HepG2 (cell line): ENCODE measurements at regions of chr18 and their contacts with region 1.

Region 1: DNA sequence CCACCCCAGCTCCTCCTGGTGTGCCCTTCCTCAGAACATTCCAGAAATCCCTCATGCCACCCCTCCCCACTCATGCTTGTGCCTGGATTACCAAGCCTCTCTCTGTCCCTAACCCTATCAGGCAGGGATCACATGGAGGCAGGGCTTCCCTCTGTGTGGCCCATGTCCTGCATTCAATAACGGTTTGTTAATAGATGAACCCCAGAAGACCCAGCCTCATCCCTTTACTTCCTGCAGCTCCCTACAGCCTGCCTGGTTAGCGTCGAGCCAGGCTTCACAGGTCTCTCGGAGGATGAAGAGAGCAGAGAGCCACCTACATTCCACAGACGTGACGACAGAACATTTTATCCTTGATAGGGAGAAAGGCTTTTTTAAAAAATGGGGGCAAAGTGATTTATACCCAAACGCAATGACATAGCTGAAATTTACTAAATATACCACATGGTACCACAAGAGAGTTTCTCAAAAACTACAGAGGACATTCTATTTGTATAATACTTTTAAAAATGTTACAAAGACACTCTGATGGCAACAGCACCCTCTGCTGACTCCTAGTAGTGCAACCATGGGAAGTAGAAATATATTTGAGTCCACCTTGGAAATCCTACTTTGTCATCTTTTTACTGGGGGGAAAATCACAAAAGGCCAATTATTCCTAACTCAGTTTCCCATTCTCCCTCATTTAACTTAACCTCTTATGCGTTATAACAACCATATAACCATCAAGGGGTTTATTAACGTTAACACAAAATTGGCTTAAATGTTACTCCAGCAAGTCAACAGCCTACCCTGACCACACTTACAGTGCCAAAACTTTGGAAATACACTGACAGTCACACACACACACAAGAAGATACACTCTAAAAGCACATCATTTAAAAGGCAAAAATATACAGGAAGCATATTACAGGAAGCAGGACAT is 30.7 kb downstream of the FBXO15 start:
- DNase-seq: peak; percentile 20
- ATAC-seq: peak; percentile 82
- H3K4me3 ChIP-seq: no peak overlapping the region
- H3K27ac ChIP-seq: no peak overlapping the region
- H3K4me1 ChIP-seq: no peaks in the 10 kb centered on the region
- H3K27me3 ChIP-seq: peaks cover 0 to 10% of the 10 kb centered on the region in 2 experiments; a peak in 3 of 5 replicates
- CTCF ChIP-seq: peak; percentile 56
- EP300 ChIP-seq: no peak
- POLR2A ChIP-seq: no peak
- RAD21 ChIP-seq: no peak

Region 2: DNA sequence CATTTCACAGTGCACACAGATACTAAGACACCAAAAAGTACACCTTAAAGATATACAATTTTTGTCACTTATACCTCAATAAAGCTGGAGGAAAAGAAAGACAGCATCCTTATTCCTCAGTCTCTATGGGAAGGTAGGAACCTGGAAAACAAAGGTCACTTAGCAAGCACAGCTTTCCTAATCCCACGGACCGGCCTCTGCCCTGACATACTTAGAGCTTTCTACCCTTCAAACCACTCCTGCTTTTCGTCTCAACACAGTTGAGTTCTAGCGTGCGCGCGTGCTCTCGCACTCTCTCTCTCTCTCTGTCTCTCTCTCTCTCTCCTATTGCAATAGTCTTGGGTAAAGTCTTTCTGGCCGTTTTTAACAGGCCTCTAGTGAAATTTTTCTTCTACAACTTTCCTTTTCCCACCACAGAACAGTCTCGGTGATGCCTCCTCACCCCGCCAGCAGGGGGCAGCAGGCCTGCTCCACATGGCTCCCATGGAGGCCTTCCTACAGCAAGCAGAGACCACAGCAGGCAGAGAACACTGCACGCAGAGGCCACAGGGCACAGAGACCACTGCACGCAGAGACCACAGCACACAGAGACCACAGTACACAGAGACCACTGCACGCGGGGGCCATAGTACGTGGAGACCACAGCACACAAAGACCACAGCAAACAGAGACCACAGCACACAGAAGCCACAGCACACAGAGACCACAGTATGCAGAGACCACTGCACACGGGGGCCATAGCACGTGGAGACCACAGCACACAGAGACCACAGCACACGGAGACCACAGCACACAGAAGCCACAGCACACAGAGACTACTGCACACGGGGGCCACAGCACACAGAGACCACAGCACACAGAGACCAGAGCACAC is 76.2 kb before region 1 on chr18:
- CTCF ChIA-PET with region 1: interaction called, 6 read pairs
- POLR2A ChIA-PET with region 1: no interaction called
- in situ Hi-C with region 1: no loop called
- intact Hi-C with region 1: loop called (anchors 5 kb)
- DNase-seq: peak; percentile 28
- ATAC-seq: peak; percentile 100
- H3K4me3 ChIP-seq: no peak overlapping the region
- H3K27ac ChIP-seq: no peak overlapping the region
- H3K4me1 ChIP-seq: no peaks in the 10 kb centered on the region
- H3K27me3 ChIP-seq: no peaks in the 10 kb centered on the region
- CTCF ChIP-seq: peak; percentile 84
- EP300 ChIP-seq: no peak
- POLR2A ChIP-seq: no peak
- RAD21 ChIP-seq: no peak; the same call in 1 of the 2 replicates

Region 3: DNA sequence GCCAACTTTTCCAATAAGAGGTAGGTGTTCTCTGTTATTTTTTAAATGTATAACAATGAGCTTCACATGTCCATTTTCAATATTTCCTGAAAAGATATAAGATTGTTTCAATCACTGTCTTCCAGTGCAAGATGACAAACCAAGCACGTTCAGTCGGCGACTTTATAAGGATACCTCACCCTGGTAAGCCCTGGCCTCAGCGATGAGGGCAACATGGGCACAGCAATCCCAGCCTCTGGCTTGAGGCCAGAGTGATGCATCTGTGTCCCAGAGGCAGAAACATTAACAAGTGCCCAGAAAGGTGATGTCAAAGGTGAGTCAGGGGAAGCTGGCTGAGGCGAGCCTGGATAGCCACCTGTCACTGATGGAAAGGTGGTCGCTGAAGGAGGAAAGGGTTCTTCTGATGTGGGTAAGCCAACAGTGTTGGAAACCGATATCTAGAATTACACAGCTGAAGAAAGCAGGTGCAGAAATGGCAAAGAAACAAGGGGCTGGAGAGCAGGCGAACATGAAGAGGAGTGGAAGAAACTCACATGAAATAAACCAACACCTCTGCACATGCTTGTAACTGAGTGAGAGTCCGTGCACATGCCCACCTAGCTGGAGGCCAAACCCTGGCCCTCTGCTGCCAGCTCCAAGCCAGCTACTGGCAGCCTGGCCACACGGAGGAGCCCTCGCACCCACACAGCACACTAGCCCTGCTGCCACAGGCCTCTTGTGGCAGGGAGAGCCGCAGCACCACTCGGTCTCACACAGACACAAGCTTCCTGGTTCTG is 34.7 kb before region 1 on chr18:
- CTCF ChIA-PET with region 1: interaction called, 6 read pairs
- POLR2A ChIA-PET with region 1: no interaction called
- in situ Hi-C with region 1: no loop called
- intact Hi-C with region 1: loop called (anchors 1 kb)
- DNase-seq: peak; percentile 65
- ATAC-seq: peak; percentile 100
- H3K4me3 ChIP-seq: peak overlapping the region in 2 of 3 experiments; percentile 6 to 21; a peak in 4 of 6 replicates
- H3K27ac ChIP-seq: no peak overlapping the region
- H3K4me1 ChIP-seq: peaks cover 12% of the 10 kb centered on the region; the same call in 1 of the 2 replicates
- H3K27me3 ChIP-seq: peaks cover 0 to 38% of the 10 kb centered on the region in 2 experiments
- CTCF ChIP-seq: peak; percentile 87
- EP300 ChIP-seq: no peak
- POLR2A ChIP-seq: no peak
- RAD21 ChIP-seq: peak; percentile 71